HepG2 (cell line): ENCODE measurements at regions of chr1 and their contacts with region 1.

Region 1: DNA sequence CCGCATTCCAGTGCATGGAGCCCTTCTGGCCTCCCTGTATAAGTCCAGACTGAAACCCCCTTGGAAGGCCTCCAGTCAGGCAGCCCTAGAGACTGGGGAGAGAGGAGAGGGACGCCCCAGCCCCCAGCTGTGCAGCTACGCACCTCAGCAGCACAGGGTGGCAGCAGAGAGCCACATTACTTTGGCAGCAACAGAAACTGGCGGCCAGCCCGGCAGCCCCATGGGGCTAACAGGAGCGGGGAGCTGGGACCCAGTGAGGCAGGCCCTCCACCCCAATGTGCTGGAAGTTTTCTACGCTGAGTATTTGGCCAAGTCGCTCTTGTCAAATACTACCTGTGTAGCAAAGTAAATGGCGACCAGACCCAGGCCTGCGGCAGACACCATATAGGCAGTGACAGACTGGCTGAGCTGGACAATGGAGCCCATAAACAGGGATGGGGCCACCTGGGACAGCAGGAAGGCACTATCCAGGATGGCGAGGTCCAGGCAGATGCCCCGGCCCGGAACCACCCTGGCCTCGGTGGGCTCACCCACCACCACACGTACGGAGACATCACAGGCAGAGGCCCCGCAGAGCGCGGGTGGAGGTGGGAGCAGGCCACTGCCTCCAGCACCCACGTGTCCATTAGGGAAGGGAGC is 21.2 kb downstream of the SLC45A3 start:
- DNase-seq: peak; percentile 46
- ATAC-seq: peak; percentile 93
- H3K4me3 ChIP-seq: no peak overlapping the region
- H3K27ac ChIP-seq: no peak overlapping the region
- H3K4me1 ChIP-seq: peaks cover 6% of the 10 kb centered on the region
- H3K27me3 ChIP-seq: no peaks in the 10 kb centered on the region
- CTCF ChIP-seq: peak; percentile 96
- EP300 ChIP-seq: no peak
- POLR2A ChIP-seq: no peak
- RAD21 ChIP-seq: peak; percentile 98

Region 2: DNA sequence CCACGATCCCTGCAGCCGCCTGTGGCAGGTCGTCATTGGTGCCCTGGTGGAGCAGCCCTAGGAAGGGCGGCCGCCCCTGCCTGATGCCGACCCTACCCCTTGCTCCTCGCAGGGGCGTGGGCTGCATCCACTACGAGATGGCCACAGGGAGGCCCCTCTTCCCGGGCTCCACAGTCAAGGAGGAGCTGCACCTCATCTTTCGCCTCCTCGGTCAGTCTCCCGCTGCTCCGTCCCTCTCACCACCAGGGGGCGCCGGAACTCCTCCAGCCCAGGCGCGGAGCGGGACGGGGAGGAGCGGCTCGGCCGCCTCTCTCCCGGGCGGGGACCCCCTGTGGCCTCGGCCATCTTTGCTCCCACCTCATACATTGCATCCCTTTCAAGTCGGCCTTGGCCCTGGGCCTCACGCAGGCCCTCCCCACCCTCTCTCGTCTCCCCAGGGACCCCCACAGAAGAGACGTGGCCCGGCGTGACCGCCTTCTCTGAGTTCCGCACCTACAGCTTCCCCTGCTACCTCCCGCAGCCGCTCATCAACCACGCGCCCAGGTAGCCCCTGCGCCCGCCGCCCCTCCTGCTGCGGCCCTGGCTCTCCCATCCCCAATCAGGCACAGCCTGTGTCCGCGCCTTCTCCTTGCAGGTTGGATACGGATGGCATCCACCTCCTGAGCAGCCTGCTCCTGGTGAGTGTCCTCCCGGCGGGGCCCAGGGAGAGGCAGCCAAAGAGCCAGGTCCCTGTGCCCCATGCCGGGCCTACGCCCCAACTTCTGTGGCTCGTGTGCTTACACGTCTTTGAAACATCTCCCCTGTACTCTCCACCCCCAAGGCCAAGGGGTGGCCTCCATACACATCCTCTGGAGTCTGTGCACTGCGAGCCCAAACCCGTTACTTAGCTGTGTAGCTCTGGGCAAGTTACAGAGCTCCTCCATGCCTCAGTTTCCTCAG is 129.9 kb before region 1 on chr1:
- CTCF ChIA-PET with region 1: interaction called, 27 read pairs
- POLR2A ChIA-PET with region 1: no interaction called
- in situ Hi-C with region 1: no loop called
- intact Hi-C with region 1: no loop called
- DNase-seq: no peak
- ATAC-seq: peak; percentile 83
- H3K4me3 ChIP-seq: no peak overlapping the region
- H3K27ac ChIP-seq: no peak overlapping the region
- H3K4me1 ChIP-seq: peaks cover 12% of the 10 kb centered on the region
- H3K27me3 ChIP-seq: no peaks in the 10 kb centered on the region
- CTCF ChIP-seq: peak; percentile 93
- EP300 ChIP-seq: no peak
- POLR2A ChIP-seq: no peak
- RAD21 ChIP-seq: peak; percentile 81

Region 3: GRCh38 chr1:205591522-205592351 is 67.3 kb before region 1 on chr1:
- CTCF ChIA-PET with region 1: interaction called, 99 read pairs
- POLR2A ChIA-PET with region 1: interaction called, 35 read pairs
- in situ Hi-C with region 1: loop called (anchors 5 kb)
- intact Hi-C with region 1: loop called (anchors 1 kb)
- DNase-seq: peak; percentile 73
- ATAC-seq: peak; percentile 86
- H3K4me3 ChIP-seq: peak overlapping the region; percentile 59 to 85 (median 68); a peak in 5 of 6 replicates
- H3K27ac ChIP-seq: peak overlapping the region; percentile 57
- H3K4me1 ChIP-seq: peaks cover 36% of the 10 kb centered on the region
- H3K27me3 ChIP-seq: 0 out of 5 replicates have a peak, but pooled peaks cover 0 to 7% of the 10 kb centered on the region in 2 experiments
- CTCF ChIP-seq: peak; percentile 100
- EP300 ChIP-seq: no peak
- POLR2A ChIP-seq: peak in 1 of 2 experiments; percentile 39; a peak in 1 of 4 replicates
- RAD21 ChIP-seq: peak; percentile 99

Region 4: GRCh38 chr1:205631727-205632373 is 27.2 kb before region 1 on chr1 and contains the start of gene ELK4:
- CTCF ChIA-PET with region 1: interaction called, 3 read pairs
- POLR2A ChIA-PET with region 1: interaction called, 16 read pairs
- in situ Hi-C with region 1: no loop called
- intact Hi-C with region 1: no loop called
- DNase-seq: peak; percentile 95
- ATAC-seq: peak; percentile 78
- H3K4me3 ChIP-seq: peak within 1 kb of the TSS; percentile 64 to 96 (median 95)
- H3K27ac ChIP-seq: peak within 1 kb of the TSS; percentile 96
- H3K4me1 ChIP-seq: peaks cover 54% of the 10 kb centered on the region
- H3K27me3 ChIP-seq: no peaks in the 10 kb centered on the region; a peak in 1 of 5 replicates
- CTCF ChIP-seq: peak; percentile 92
- EP300 ChIP-seq: no peak
- POLR2A ChIP-seq: peak; percentile 90 to 98
- RAD21 ChIP-seq: peak; percentile 96
- total RNA-seq, gene ELK4: 13.1 and 15.0 TPM in 2 replicates

Region 5: GRCh38 chr1:205711104-205712020 is 52.3 kb after region 1 on chr1:
- CTCF ChIA-PET with region 1: interaction called, 83 read pairs
- POLR2A ChIA-PET with region 1: interaction called, 11 read pairs
- in situ Hi-C with region 1: no loop called
- intact Hi-C with region 1: loop called (anchors 1 kb)
- DNase-seq: peak; percentile 75
- ATAC-seq: peak; percentile 79
- H3K4me3 ChIP-seq: no peak overlapping the region
- H3K27ac ChIP-seq: peak overlapping the region; percentile 15
- H3K4me1 ChIP-seq: peaks cover 91% of the 10 kb centered on the region
- H3K27me3 ChIP-seq: no peaks in the 10 kb centered on the region
- CTCF ChIP-seq: peak; percentile 93
- EP300 ChIP-seq: no peak
- POLR2A ChIP-seq: no peak
- RAD21 ChIP-seq: peak; percentile 81

Region 6: DNA sequence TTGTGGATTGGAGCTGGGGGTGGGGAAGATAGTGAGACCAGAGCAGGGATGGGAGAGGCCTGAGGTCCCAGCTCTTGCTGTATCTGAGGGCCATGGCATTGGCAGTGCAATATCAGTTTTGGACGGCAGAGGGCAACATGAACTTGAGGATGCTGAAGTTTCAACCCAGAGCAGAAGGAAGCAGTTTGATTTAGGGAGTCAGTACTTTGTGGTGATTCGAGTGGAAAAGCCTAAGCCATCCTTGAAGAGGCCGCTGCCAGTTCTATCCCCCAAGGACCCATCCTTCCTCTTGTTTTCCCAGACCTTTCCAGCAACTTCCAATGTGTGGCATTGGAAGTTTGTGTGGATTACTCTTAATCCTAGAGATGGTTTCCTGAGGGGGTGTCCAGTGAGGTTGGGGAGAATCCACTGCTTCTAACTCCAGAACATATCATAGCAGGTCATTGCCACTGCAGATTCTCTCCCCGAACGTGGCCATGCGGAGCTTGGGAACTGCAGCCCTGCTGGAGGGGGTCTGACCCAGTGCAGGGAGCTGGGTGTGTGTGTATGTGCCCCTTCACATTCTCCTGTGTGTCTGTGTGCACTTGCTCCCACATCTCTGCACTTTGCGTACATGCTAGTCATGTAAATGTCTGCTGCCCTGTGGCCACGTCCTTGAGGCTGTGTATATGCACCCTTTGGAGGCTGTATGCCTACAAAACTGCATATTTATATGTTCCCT is 260.1 kb after region 1 on chr1:
- CTCF ChIA-PET with region 1: no interaction called
- POLR2A ChIA-PET with region 1: no interaction called
- in situ Hi-C with region 1: no loop called
- intact Hi-C with region 1: loop called (anchors 10 kb)
- DNase-seq: peak; percentile 52
- ATAC-seq: peak; percentile 85
- H3K4me3 ChIP-seq: no peak overlapping the region
- H3K27ac ChIP-seq: no peak overlapping the region
- H3K4me1 ChIP-seq: 0 out of 2 replicates have a peak, but pooled peaks cover 4% of the 10 kb centered on the region
- H3K27me3 ChIP-seq: peaks cover 2 to 3% of the 10 kb centered on the region in 2 experiments; a peak in 2 of 5 replicates
- CTCF ChIP-seq: peak; percentile 91
- EP300 ChIP-seq: no peak
- POLR2A ChIP-seq: no peak
- RAD21 ChIP-seq: peak; percentile 82